ENCODE measurements at regions of chr2 and their contacts with region 1.

Region 1: GRCh38 chr2:240232961-240233893 is 92.8 kb upstream of the OTOS start:
- DNase-seq: peak; percentile 86
- ATAC-seq: peak; percentile 76 to 88

Region 2: GRCh38 chr2:240205348-240205747 is 27.9 kb before region 1 on chr2:
- intact Hi-C with region 1: no loop called
- DNase-seq: no peak
- ATAC-seq: peak in 1 of 2 donors; percentile 67

Region 3: DNA sequence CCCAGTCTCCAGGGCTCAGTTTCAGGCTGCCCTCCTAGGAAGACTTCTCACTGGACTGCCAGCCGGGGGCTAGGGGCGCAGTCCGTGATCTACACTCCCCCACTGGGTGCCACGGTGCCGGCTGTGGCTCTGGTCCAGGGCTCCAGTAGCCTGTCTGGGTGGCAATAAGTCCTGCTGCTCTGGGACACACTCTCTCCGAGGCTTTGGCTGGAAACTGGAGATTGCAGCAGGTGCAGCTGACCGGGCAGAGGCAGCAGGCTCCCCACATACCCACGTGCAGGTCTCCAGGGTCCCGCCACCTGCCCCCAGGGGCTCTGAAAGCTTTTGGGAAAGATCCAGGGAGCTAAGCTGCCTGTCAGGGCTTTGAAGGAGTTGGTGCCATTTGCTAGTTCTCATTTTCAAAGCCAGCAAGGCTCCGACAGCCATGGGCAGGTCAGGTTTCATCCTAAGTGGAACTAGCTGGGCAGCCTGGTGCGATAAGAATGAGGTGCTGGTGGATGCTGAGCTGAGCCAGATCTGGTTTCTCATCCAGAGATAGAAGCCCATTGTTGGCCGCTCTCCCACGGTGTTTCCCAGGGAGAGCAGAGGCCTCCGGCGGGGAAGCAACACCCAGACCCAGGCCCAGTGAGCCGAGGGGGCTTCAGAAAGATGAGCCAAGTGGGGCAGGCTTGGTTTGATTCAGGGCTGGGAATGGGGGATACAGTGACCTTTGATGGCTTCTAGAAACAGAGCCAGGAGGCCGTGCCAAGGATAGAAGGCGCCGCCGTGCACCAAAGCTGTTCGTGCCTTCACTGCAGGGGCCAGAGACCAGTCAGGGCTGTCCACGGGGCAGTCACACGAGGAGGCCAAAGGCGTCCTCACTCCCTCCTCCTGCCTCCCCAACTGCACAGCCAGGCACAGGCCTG is 60.6 kb after region 1 on chr2:
- intact Hi-C with region 1: loop called in 1 of 2 experiments (anchors 5 kb)
- DNase-seq: peak; percentile 51
- ATAC-seq: peak; percentile 72 to 77